Endothelial cell of umbilical vein (primary cell): ENCODE measurements at regions of chr19 and their contacts with region 1.

Region 1: GRCh38 chr19:18281082-18282020 is at the start of gene JUND:
- DNase-seq: peak; percentile 98
- H3K4me3 ChIP-seq: peak within 1 kb of the TSS; percentile 72 to 92 (median 80)
- H3K27ac ChIP-seq: peak within 1 kb of the TSS; percentile 94
- H3K4me1 ChIP-seq: peaks cover 19% of the 10 kb centered on the region
- H3K27me3 ChIP-seq: no peaks in the 10 kb centered on the region
- CTCF ChIP-seq: no peak
- POLR2A ChIP-seq: peak; percentile 98
- total RNA-seq, gene JUND: 130 and 137 TPM in 2 replicates

Region 2: DNA sequence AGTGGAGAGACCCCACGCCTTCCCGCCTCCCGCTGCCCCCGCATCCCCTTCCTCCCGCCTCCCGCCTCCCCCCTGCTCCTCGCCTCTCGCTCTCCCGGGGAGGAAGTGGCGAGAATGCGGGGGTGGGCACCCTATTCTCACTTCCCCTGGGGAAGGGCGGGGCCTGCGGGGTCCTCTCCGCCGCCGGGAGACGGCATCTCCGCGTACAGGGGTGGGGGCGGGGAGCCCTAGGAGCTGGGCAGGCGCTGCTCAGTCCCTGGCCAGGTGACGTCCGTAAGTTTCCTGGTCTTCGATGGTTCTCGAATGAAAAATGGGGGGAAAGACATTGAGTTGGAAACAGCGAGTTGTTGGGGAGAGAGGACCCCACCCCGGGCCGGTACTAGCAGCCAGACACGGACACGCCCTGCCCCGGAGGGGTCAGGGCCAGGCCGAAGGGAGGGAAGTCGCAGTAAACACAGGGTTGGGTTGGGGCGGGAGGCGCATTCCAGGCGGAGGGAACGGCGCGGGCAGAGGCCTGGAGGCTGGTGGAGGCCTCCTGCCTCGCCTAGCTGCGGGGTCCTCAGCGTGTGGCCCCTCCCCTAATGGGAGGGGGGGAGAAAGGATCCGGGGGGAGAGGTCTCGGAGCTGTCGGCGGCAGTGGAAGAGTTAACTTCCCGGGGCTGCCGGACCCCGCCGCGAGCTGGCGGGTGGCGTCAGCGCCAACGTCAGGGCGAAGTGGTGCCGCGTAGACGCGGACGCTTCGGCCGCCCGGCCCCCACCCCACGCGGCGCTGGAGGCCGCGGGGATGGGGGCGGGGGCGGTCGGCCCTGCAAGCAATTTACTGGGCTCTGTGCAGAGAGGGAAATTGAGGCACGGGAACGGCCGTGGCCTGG is 10.5 kb after region 1 on chr19:
- CTCF ChIA-PET with region 1: interaction called, 64 read pairs
- POLR2A ChIA-PET with region 1: interaction called, 100 read pairs
- dilution Hi-C with region 1: no loop called
- intact Hi-C with region 1: loop called (anchors 1 kb)
- DNase-seq: peak; percentile 72
- H3K4me3 ChIP-seq: peak overlapping the region; percentile 52 to 78 (median 56)
- H3K27ac ChIP-seq: peak overlapping the region; percentile 77
- H3K4me1 ChIP-seq: peaks cover 16% of the 10 kb centered on the region
- H3K27me3 ChIP-seq: no peaks in the 10 kb centered on the region
- CTCF ChIP-seq: no peak
- POLR2A ChIP-seq: peak; percentile 35

Region 3: GRCh38 chr19:18322759-18323460 is 41.6 kb after region 1 on chr19 and contains the start of gene LSM4:
- CTCF ChIA-PET with region 1: interaction called, 401 read pairs
- POLR2A ChIA-PET with region 1: interaction called, 113 read pairs
- dilution Hi-C with region 1: no loop called
- intact Hi-C with region 1: loop called (anchors 1 kb)
- DNase-seq: peak; percentile 98
- H3K4me3 ChIP-seq: peak within 1 kb of the TSS; percentile 43 to 76 (median 71)
- H3K27ac ChIP-seq: peak within 1 kb of the TSS; percentile 73
- H3K4me1 ChIP-seq: peaks cover 50% of the 10 kb centered on the region
- H3K27me3 ChIP-seq: no peaks in the 10 kb centered on the region
- CTCF ChIP-seq: peak; percentile 5 to 38
- POLR2A ChIP-seq: no peak
- total RNA-seq, gene LSM4: 103 and 118 TPM in 2 replicates

Region 4: DNA sequence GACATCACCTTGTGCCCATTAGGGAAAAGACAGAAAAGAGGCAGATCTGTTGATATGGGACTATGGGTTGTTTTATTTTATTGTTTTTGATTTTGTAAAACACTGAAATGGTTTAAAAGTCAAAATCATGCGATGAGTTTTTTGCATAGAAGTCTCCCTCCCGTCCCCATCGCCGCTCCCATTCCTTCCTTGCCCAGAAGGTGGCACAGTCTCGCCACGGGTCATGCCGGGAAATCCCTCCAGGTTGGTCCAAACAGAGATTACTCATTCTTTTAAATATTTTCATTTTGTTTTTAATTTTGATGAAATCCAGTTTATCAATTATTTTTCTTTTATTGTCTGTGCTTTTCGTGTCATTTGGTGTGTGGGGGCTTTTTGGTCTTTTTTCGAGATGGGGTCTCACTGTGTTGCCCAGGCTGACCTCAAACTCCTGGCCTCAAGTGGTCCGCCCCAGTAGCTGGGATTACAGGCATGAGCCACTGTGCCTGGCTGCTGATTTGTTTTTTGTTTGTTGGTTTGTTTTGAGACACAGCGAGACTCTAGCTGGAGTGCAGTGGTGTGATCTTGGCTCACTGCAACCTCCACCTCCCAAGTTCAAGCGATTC is 68.3 kb after region 1 on chr19:
- CTCF ChIA-PET with region 1: interaction called, 39 read pairs
- POLR2A ChIA-PET with region 1: interaction called, 12 read pairs
- dilution Hi-C with region 1: no loop called
- intact Hi-C with region 1: loop called (anchors 5 kb)
- DNase-seq: peak; percentile 67
- H3K4me3 ChIP-seq: no peak overlapping the region
- H3K27ac ChIP-seq: no peak overlapping the region
- H3K4me1 ChIP-seq: no peaks in the 10 kb centered on the region
- H3K27me3 ChIP-seq: no peaks in the 10 kb centered on the region
- CTCF ChIP-seq: peak; percentile 80 to 86
- POLR2A ChIP-seq: no peak

Region 5: GRCh38 chr19:18408053-18408476 is 126.7 kb after region 1 on chr19:
- CTCF ChIA-PET with region 1: interaction called, 119 read pairs
- POLR2A ChIA-PET with region 1: interaction called, 9 read pairs
- dilution Hi-C with region 1: no loop called
- intact Hi-C with region 1: loop called (anchors 2 kb)
- DNase-seq: no peak
- H3K4me3 ChIP-seq: no peak overlapping the region
- H3K27ac ChIP-seq: no peak overlapping the region
- H3K4me1 ChIP-seq: no peaks in the 10 kb centered on the region
- H3K27me3 ChIP-seq: no peaks in the 10 kb centered on the region
- CTCF ChIP-seq: peak; percentile 55 to 69
- POLR2A ChIP-seq: no peak